ENCODE measurements at regions of chr1 and their contacts with region 1.

Region 1: GRCh38 chr1:243287652-243288051 is 31.8 kb downstream of the SDCCAG8 start:
- DNase-seq: no peak
- H3K4me3 Mint-ChIP-seq: no peak overlapping the region
- H3K27ac Mint-ChIP-seq: peak overlapping the region; percentile 42
- H3K4me1 Mint-ChIP-seq: peaks cover 54% of the 10 kb centered on the region
- H3K27me3 Mint-ChIP-seq: no peaks in the 10 kb centered on the region
- CTCF ChIP-seq: no peak

Region 2: DNA sequence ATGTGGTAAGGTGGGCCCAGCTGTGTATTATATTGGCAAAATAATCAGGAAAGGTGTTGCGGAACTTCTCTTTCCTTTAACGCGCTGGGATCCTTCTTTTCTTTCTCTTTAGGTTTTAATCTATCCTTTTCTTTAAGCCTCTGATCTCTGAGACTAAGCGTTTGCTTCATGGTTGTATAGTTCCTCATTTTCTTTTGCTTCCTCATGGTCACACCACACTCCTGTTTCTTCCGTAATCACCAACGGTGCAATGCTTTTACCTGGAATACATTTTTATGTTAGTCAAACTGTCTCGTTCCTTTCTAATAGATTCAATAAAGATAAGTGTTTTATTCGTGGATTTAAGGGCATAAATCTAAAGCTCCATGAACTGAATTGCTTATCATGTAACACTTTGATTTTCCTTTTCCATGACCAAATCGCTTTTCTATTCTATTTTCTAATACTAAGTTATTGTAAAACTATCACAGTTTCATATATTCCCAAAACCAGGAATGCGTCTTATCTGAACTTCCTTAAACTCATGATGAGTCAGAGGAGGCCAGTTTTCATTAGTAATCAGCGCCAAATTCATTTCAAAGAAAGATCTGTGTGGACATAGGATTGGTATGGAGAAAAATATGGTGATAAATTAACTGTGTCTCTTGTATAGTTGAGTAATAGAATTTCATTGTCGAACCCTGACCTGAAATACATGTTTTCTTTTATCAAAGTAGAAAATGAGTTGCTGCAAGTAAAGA is 19.6 kb before region 1 on chr1:
- CTCF ChIA-PET with region 1: interaction called, 10 read pairs
- intact Hi-C with region 1: no loop called
- DNase-seq: no peak
- H3K4me3 Mint-ChIP-seq: peak overlapping the region; percentile 54
- H3K27ac Mint-ChIP-seq: peak overlapping the region; percentile 95
- H3K4me1 Mint-ChIP-seq: peaks cover 65% of the 10 kb centered on the region
- H3K27me3 Mint-ChIP-seq: no peaks in the 10 kb centered on the region
- CTCF ChIP-seq: no peak

Region 3: DNA sequence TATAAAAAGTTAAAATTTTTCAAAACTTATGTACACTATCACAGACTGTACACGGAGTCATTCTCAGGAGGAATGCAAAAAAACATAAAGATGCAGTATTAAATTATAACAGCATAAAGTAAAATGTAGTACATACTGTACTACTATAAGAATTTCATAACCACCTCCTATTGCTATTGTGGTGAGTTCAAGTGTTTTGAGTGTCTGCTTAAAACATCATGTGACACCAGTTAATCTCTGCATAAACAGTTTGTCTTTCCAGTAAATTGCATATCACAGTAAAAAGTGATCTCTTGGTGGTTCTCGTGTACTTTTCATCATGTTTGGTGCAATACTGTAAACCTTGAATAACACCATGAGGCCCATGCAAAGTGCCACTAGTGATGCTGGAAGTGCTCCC is 13.4 kb after region 1 on chr1:
- CTCF ChIA-PET with region 1: interaction called, 3 read pairs
- intact Hi-C with region 1: loop called (anchors 2 kb)
- DNase-seq: no peak
- H3K4me3 Mint-ChIP-seq: no peak overlapping the region
- H3K27ac Mint-ChIP-seq: no peak overlapping the region
- H3K4me1 Mint-ChIP-seq: peaks cover under 1% of the 10 kb centered on the region
- H3K27me3 Mint-ChIP-seq: no peaks in the 10 kb centered on the region
- CTCF ChIP-seq: no peak